ENCODE measurements at regions of chr4 and their contacts with region 1.

Region 1: DNA sequence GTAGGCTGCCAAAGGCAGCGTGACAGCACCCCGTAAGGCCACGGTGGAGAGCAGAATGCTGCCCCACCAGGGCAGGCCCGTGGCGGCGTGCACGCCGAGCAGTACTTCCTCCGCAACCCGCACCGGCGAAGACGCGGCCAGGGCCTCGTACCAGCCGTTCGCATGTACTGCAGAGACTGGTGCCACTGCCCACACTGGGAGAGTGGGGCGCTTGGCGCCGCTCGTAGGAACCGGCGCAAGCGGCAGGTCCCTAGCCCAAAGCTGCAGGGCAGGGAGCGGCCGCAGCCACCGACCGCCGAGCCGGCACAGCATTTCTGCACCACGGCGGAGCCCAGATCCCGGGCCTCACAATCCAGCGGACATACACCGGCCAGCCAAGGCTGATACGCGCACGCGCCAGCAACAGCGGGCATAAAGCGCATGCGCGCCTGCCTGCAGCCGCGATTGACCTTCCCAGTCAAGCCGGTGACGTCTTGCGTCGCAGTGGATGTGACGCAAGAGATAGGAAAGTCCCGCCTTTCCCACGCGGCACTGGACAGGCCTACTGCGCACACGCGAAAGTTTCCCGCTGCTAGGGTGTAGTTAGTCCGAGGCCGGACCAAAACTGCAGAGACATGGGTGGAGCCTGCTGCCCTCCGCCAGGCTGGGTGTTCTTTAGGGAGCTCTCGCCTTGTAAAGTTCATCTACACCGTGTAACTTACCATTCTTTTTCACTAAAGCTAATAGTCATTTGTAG is at the start of gene COX18:
- DNase-seq: peak; percentile 95 to 98
- ATAC-seq: peak; percentile 90 to 95
- H3K4me3 ChIP-seq: peak within 1 kb of the TSS; percentile 80 to 92 (median 86)
- H3K27ac ChIP-seq: peak within 1 kb of the TSS; percentile 88 to 94 (median 93)
- H3K4me1 ChIP-seq: peaks cover 5 to 26% of the 10 kb centered on the region in 2 donors
- H3K27me3 ChIP-seq: no peaks in the 10 kb centered on the region
- CTCF ChIP-seq: peak in 1 of 5 experiments; percentile 15
- POLR2A ChIP-seq: peak; percentile 70 to 81
- total RNA-seq, gene COX18: 7.4 to 15.0 (median 12.7) TPM

Region 2: GRCh38 chr4:73019462-73020047 is 50.0 kb before region 1 on chr4:
- in situ Hi-C with region 1: no loop called
- intact Hi-C with region 1: no loop called
- DNase-seq: no peak
- ATAC-seq: no peak
- H3K4me3 ChIP-seq: no peak overlapping the region
- H3K27ac ChIP-seq: no peak overlapping the region
- H3K4me1 ChIP-seq: no peaks in the 10 kb centered on the region
- H3K27me3 ChIP-seq: no peaks in the 10 kb centered on the region
- CTCF ChIP-seq: peak in 4 of 5 experiments; percentile 23 to 59 (median 36)
- POLR2A ChIP-seq: no peak

Region 3: GRCh38 chr4:73127839-73128453 is 58.4 kb after region 1 on chr4:
- in situ Hi-C with region 1: no loop called
- intact Hi-C with region 1: loop called (anchors 5 kb)
- DNase-seq: no peak
- ATAC-seq: peak in 1 of 2 donors; percentile 76
- H3K4me3 ChIP-seq: no peak overlapping the region
- H3K27ac ChIP-seq: no peak overlapping the region
- H3K4me1 ChIP-seq: no peaks in the 10 kb centered on the region
- H3K27me3 ChIP-seq: no peaks in the 10 kb centered on the region
- CTCF ChIP-seq: peak in 2 of 5 experiments; percentile 17 to 40
- POLR2A ChIP-seq: no peak

Region 4: GRCh38 chr4:73245955-73246354 is 176.4 kb after region 1 on chr4:
- in situ Hi-C with region 1: loop called (anchors 5 to 10 kb)
- intact Hi-C with region 1: no loop called
- DNase-seq: no peak
- ATAC-seq: no peak
- H3K4me3 ChIP-seq: no peak overlapping the region
- H3K27ac ChIP-seq: no peak overlapping the region
- H3K4me1 ChIP-seq: peaks cover 35 to 39% of the 10 kb centered on the region in 2 donors
- H3K27me3 ChIP-seq: no peaks in the 10 kb centered on the region
- CTCF ChIP-seq: no peak
- POLR2A ChIP-seq: no peak

Region 5: DNA sequence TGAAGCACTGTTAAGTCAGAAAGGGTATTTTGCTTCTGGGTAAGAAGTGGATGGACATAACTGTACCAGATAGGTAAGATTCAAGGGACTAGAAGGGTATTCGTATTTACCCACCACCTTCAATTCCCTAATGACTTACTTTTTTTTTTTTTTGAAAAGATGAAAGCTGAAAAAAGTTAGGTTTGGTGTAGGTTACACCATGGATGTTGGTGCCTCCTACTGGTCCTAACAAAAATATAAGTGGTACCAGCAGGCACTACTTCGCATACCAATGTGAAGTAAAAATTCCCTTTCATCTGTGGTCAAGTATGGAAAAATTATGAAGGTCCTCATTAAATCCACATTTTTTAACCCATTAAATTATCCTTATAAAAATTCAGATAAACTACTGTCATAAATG is 181.9 kb after region 1 on chr4:
- in situ Hi-C with region 1: loop called (anchors 5 to 10 kb)
- intact Hi-C with region 1: no loop called
- DNase-seq: no peak
- ATAC-seq: no peak
- H3K4me3 ChIP-seq: no peak overlapping the region
- H3K27ac ChIP-seq: no peak overlapping the region
- H3K4me1 ChIP-seq: peaks cover 46 to 51% of the 10 kb centered on the region in 2 donors
- H3K27me3 ChIP-seq: no peaks in the 10 kb centered on the region
- CTCF ChIP-seq: no peak
- POLR2A ChIP-seq: no peak

Region 6: GRCh38 chr4:73258686-73259570 is 189.4 kb after region 1 on chr4 and contains the start of gene ANKRD17:
- in situ Hi-C with region 1: loop called in 3 of 4 experiments (anchors 5 to 10 kb)
- intact Hi-C with region 1: loop called (anchors 1 kb)
- DNase-seq: peak; percentile 83 to 90
- ATAC-seq: peak; percentile 82 to 87
- H3K4me3 ChIP-seq: peak within 1 kb of the TSS; percentile 80 to 93 (median 90)
- H3K27ac ChIP-seq: peak within 1 kb of the TSS; percentile 92 to 98 (median 96)
- H3K4me1 ChIP-seq: peaks cover 42 to 51% of the 10 kb centered on the region in 2 donors
- H3K27me3 ChIP-seq: no peaks in the 10 kb centered on the region
- CTCF ChIP-seq: peak; percentile 24 to 54 (median 27)
- POLR2A ChIP-seq: peak; percentile 76 to 77
- total RNA-seq, gene ANKRD17: 40.8 to 68.5 (median 54.8) TPM

Region 7: GRCh38 chr4:74157561-74158465 is 1088.3 kb after region 1 on chr4 and contains the start of gene MTHFD2L:
- in situ Hi-C with region 1: loop called in 1 of 4 experiments (anchors 25 kb)
- intact Hi-C with region 1: no loop called
- DNase-seq: peak; percentile 80 to 92
- ATAC-seq: peak; percentile 90 to 91
- H3K4me3 ChIP-seq: peak within 1 kb of the TSS; percentile 54 to 64 (median 60)
- H3K27ac ChIP-seq: peak within 1 kb of the TSS; percentile 78 to 91 (median 86)
- H3K4me1 ChIP-seq: peaks cover 18 to 31% of the 10 kb centered on the region in 2 donors
- H3K27me3 ChIP-seq: no peaks in the 10 kb centered on the region
- CTCF ChIP-seq: peak in 1 of 5 experiments; percentile 17
- POLR2A ChIP-seq: peak; percentile 85 to 93
- total RNA-seq, gene MTHFD2L: 7.0 to 11.0 (median 7.8) TPM

Region 8: GRCh38 chr4:75030733-75031132 is 1961.2 kb after region 1 on chr4:
- in situ Hi-C with region 1: no loop called
- intact Hi-C with region 1: no loop called
- DNase-seq: no peak
- ATAC-seq: no peak
- H3K4me3 ChIP-seq: no peak overlapping the region
- H3K27ac ChIP-seq: no peak overlapping the region
- H3K4me1 ChIP-seq: no peaks in the 10 kb centered on the region
- H3K27me3 ChIP-seq: no peaks in the 10 kb centered on the region
- CTCF ChIP-seq: no peak
- POLR2A ChIP-seq: no peak

Measured in gastrocnemius medialis (tissue), 4 donors.